ENCODE measurements at regions of chr1 and their contacts with region 1.

Region 1: GRCh38 chr1:31955917-31956736 is 18.0 kb upstream of the PTP4A2 start:
- DNase-seq: peak; percentile 95
- H3K4me3 Mint-ChIP-seq: peak overlapping the region; percentile 71
- H3K27ac Mint-ChIP-seq: peak overlapping the region; percentile 93
- H3K4me1 Mint-ChIP-seq: peaks cover 74% of the 10 kb centered on the region
- H3K27me3 Mint-ChIP-seq: no peaks in the 10 kb centered on the region

Region 2: DNA sequence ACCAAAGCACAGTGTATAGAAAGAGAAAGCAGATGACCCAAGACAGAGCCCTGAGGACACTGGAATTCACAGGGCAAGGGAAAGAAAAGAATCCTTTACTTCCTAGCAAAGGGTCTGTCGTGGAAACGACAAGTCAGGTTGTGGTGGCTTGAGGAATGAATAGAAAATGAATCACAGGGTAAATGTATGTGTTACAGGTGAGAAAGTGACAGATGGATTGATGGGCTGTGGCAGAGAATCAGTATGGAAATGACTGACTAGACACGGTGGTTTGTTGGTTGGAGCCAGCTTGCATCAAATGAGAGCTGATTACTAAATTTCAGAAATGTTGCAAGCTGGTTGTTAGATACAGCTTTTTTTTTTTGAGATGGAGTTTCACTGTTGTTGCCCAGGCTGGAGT is 64.8 kb before region 1 on chr1:
- intact Hi-C with region 1: loop called (anchors 1 kb)
- DNase-seq: peak; percentile 71
- H3K4me3 Mint-ChIP-seq: peak overlapping the region; percentile 7
- H3K27ac Mint-ChIP-seq: peak overlapping the region; percentile 75
- H3K4me1 Mint-ChIP-seq: peaks cover 23% of the 10 kb centered on the region
- H3K27me3 Mint-ChIP-seq: no peaks in the 10 kb centered on the region

Region 3: GRCh38 chr1:31931593-31932225 is 24.4 kb before region 1 on chr1:
- intact Hi-C with region 1: loop called (anchors 1 kb)
- DNase-seq: no peak
- H3K4me3 Mint-ChIP-seq: peak overlapping the region; percentile 95
- H3K27ac Mint-ChIP-seq: peak overlapping the region; percentile 93
- H3K4me1 Mint-ChIP-seq: peaks cover 76% of the 10 kb centered on the region
- H3K27me3 Mint-ChIP-seq: no peaks in the 10 kb centered on the region

Region 4: GRCh38 chr1:31944205-31945089 is 11.7 kb before region 1 on chr1:
- intact Hi-C with region 1: loop called (anchors 1 kb)
- DNase-seq: peak; percentile 97
- H3K4me3 Mint-ChIP-seq: peak overlapping the region; percentile 77
- H3K27ac Mint-ChIP-seq: peak overlapping the region; percentile 92
- H3K4me1 Mint-ChIP-seq: peaks cover 46% of the 10 kb centered on the region
- H3K27me3 Mint-ChIP-seq: no peaks in the 10 kb centered on the region

Region 5: DNA sequence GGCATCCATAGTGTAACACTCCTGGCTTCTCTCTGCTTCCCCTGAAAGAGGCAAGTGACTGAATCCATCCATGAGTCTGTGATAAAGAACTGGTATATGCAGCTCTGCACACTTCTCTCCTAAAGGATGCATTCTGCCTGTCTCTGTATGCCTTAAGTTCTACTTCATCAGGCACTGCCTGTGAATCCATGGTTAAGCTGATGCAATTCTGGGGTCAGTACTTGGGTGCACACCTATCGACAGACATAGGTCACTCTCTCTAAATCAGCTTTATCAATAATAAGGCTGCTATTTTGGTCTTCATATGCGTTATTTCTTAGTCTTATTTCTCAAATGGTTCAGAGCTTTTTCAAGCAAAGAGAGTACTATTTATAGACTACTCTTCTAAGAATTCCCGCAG is 14.7 kb after region 1 on chr1:
- intact Hi-C with region 1: no loop called
- DNase-seq: no peak
- H3K4me3 Mint-ChIP-seq: no peak overlapping the region
- H3K27ac Mint-ChIP-seq: no peak overlapping the region
- H3K4me1 Mint-ChIP-seq: peaks cover 4% of the 10 kb centered on the region
- H3K27me3 Mint-ChIP-seq: peaks cover 2% of the 10 kb centered on the region

Measured in activated CD4-positive, alpha-beta T cell treated with anti-CD3 and anti-CD28 coated beads, Interleukin-2, amount 10 ng/mL, durations not matched to agents 24 days and 14 days (primary cell).